Common myeloid progenitor, CD34-positive (primary cell): ENCODE measurements at regions of chr1 and their contacts with region 1.

Region 1: GRCh38 chr1:101288491-101288944 is 51.7 kb downstream of the S1PR1 start:
- DNase-seq: peak; percentile 76 to 86 (median 84)
- H3K4me3 ChIP-seq: no peak overlapping the region
- H3K27ac ChIP-seq: no peak overlapping the region
- H3K4me1 ChIP-seq: peaks cover 15 to 51% (median 42%) of the 10 kb centered on the region in 4 experiments
- H3K27me3 ChIP-seq: no peaks in the 10 kb centered on the region

Region 2: GRCh38 chr1:100928128-100928527 is 360.4 kb before region 1 on chr1:
- CTCF ChIA-PET with region 1: interaction called, 20 read pairs
- POLR2A ChIA-PET with region 1: no interaction called
- DNase-seq: peak in 2 of 3 donors; percentile 14 to 28
- H3K4me3 ChIP-seq: no peak overlapping the region
- H3K27ac ChIP-seq: no peak overlapping the region
- H3K4me1 ChIP-seq: peaks cover 7 to 16% (median 8%) of the 10 kb centered on the region in 4 experiments
- H3K27me3 ChIP-seq: no peaks in the 10 kb centered on the region

Region 3: GRCh38 chr1:101112051-101112780 is 176.3 kb before region 1 on chr1:
- CTCF ChIA-PET with region 1: interaction called, 5 read pairs
- POLR2A ChIA-PET with region 1: interaction called, 12 read pairs
- DNase-seq: peak; percentile 91 to 98 (median 96)
- H3K4me3 ChIP-seq: peak overlapping the region in 5 of 7 experiments; percentile 3 to 48 (median 14)
- H3K27ac ChIP-seq: peak overlapping the region; percentile 77 to 89
- H3K4me1 ChIP-seq: peaks cover 24 to 43% (median 27%) of the 10 kb centered on the region in 4 experiments
- H3K27me3 ChIP-seq: no peaks in the 10 kb centered on the region

Region 4: DNA sequence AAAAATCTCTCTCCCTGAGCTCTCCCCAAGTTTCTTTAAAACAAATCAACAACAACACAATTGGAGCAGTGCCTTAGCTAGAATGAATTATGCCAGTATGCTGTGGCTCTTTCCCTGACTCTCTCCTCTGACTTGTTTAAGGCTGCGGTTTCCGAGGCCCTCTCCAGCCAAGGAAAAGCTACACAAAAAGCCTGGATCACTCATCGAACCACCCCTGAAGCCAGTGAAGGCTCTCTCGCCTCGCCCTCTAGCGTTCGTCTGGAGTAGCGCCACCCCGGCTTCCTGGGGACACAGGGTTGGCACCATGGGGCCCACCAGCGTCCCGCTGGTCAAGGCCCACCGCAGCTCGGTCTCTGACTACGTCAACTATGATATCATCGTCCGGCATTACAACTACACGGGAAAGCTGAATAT is 49.8 kb before region 1 on chr1:
- CTCF ChIA-PET with region 1: interaction called, 213 read pairs
- POLR2A ChIA-PET with region 1: interaction called, 5 read pairs
- DNase-seq: peak; percentile 67 to 70 (median 68)
- H3K4me3 ChIP-seq: peak overlapping the region in 6 of 7 experiments; percentile 45 to 93 (median 60)
- H3K27ac ChIP-seq: no peak overlapping the region
- H3K4me1 ChIP-seq: peaks cover 13 to 55% (median 33%) of the 10 kb centered on the region in 4 experiments
- H3K27me3 ChIP-seq: peaks cover 0 to 15% (median 6%) of the 10 kb centered on the region in 5 experiments

Region 5: GRCh38 chr1:101257500-101258325 is 30.8 kb before region 1 on chr1:
- CTCF ChIA-PET with region 1: interaction called, 17 read pairs
- POLR2A ChIA-PET with region 1: interaction called, 3 read pairs
- DNase-seq: peak; percentile 80 to 94 (median 94)
- H3K4me3 ChIP-seq: peak overlapping the region in 3 of 7 experiments; percentile 36 to 47 (median 38)
- H3K27ac ChIP-seq: peak overlapping the region in 1 of 2 experiments; percentile 67
- H3K4me1 ChIP-seq: peaks cover 40 to 59% (median 53%) of the 10 kb centered on the region in 4 experiments
- H3K27me3 ChIP-seq: no peaks in the 10 kb centered on the region

Region 6: GRCh38 chr1:101302831-101303511 is 14.5 kb after region 1 on chr1:
- CTCF ChIA-PET with region 1: interaction called, 29 read pairs
- POLR2A ChIA-PET with region 1: no interaction called
- DNase-seq: no peak
- H3K4me3 ChIP-seq: no peak overlapping the region
- H3K27ac ChIP-seq: no peak overlapping the region
- H3K4me1 ChIP-seq: peaks cover 7 to 25% (median 15%) of the 10 kb centered on the region in 4 experiments
- H3K27me3 ChIP-seq: no peaks in the 10 kb centered on the region

Region 7: GRCh38 chr1:101323535-101323934 is 35.0 kb after region 1 on chr1:
- CTCF ChIA-PET with region 1: no interaction called
- POLR2A ChIA-PET with region 1: no interaction called
- DNase-seq: peak in 1 of 3 donors; percentile 35
- H3K4me3 ChIP-seq: no peak overlapping the region
- H3K27ac ChIP-seq: no peak overlapping the region
- H3K4me1 ChIP-seq: peaks cover 0 to 7% (median under 1%) of the 10 kb centered on the region in 4 experiments
- H3K27me3 ChIP-seq: no peaks in the 10 kb centered on the region

Region 8: DNA sequence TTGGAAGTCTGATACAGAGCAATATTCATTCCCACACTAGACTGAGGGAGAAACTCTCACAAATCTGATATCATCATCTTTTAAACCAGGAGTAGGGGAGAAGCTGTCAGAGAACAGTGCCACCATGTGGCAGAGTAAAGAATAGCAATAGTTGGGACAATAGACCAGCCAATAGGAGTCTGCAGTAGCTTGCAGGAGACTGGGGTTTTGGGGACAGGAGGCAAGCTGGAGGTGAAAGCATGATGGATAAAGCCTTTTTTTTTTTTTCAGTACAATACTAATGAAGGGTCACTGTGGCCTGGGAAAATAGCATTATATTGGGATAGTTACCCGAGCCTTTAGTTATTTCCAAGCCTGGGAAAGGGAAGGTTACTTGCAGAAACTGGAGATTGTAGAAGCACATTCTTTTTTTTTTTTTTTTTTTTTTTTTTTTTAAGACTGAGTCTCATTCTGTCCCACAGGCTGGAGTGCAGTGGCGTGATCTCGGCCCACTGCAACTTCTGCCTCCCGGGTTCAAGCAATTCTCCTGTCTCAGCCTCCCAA is 69.0 kb after region 1 on chr1:
- CTCF ChIA-PET with region 1: interaction called, 13 read pairs
- POLR2A ChIA-PET with region 1: no interaction called
- DNase-seq: peak; percentile 85 to 89 (median 86)
- H3K4me3 ChIP-seq: no peak overlapping the region
- H3K27ac ChIP-seq: no peak overlapping the region
- H3K4me1 ChIP-seq: peaks cover 0 to 2% (median 0%) of the 10 kb centered on the region in 4 experiments
- H3K27me3 ChIP-seq: no peaks in the 10 kb centered on the region